ENCODE measurements at regions of chr11 and their contacts with region 1.

Region 1: DNA sequence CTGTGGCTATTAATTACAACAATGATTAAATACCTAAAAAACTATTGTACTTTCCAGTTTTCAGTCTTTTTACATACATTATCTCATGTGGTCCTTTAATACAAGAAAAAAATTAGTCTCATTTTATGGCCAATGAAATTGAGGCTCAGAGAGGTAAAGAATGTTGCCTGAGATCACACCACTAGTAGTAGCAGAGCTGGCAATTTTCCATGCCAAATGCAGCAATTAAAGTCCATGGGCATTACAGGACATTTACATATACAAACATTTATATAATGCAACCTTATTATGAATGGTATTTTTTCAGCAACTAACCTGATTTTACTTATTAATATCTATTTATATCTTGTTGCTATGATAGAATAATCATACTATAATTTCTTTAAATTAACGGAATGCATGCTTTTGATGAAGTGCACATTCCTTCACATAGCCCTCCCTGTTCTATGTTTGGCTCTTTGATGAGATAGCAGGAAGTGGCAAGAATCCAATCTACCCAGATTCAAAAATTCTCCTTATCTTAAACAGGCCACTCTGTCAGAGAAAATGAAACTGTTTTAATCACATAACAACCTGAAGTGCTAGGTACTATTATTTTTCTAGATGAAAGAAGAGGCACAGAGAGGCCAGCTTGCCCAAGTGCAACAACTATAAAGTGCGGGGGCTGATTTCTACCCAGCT is 120.9 kb upstream of the LDLRAD3 start:
- DNase-seq: no peak

Region 2: GRCh38 chr11:35617687-35618496 is 205.1 kb before region 1 on chr11 and contains the start of gene FJX1:
- CTCF ChIA-PET with region 1: interaction called, 10 read pairs
- POLR2A ChIA-PET with region 1: interaction called, 8 read pairs
- DNase-seq: peak; percentile 74

Region 3: GRCh38 chr11:35799655-35800054 is 23.3 kb before region 1 on chr11:
- CTCF ChIA-PET with region 1: interaction called, 14 read pairs
- POLR2A ChIA-PET with region 1: interaction called, 3 read pairs
- DNase-seq: no peak

Region 4: GRCh38 chr11:35811775-35812174 is 11.2 kb before region 1 on chr11:
- CTCF ChIA-PET with region 1: interaction called, 17 read pairs
- POLR2A ChIA-PET with region 1: no interaction called
- DNase-seq: no peak

Region 5: GRCh38 chr11:35838071-35838470 is 15.1 kb after region 1 on chr11:
- CTCF ChIA-PET with region 1: interaction called, 36 read pairs
- POLR2A ChIA-PET with region 1: no interaction called
- DNase-seq: no peak

Region 6: GRCh38 chr11:36131721-36132397 is 308.9 kb after region 1 on chr11:
- CTCF ChIA-PET with region 1: interaction called, 11 read pairs
- POLR2A ChIA-PET with region 1: no interaction called
- DNase-seq: peak; percentile 43

Region 7: GRCh38 chr11:36230779-36231699 is 408.1 kb after region 1 on chr11:
- CTCF ChIA-PET with region 1: no interaction called
- POLR2A ChIA-PET with region 1: no interaction called
- DNase-seq: no peak

Region 8: GRCh38 chr11:36265793-36266628 is 443.1 kb after region 1 on chr11:
- CTCF ChIA-PET with region 1: interaction called, 29 read pairs
- POLR2A ChIA-PET with region 1: interaction called, 6 read pairs
- DNase-seq: peak; percentile 74